ENCODE measurements at regions of chr5 and their contacts with region 1.

Region 1: DNA sequence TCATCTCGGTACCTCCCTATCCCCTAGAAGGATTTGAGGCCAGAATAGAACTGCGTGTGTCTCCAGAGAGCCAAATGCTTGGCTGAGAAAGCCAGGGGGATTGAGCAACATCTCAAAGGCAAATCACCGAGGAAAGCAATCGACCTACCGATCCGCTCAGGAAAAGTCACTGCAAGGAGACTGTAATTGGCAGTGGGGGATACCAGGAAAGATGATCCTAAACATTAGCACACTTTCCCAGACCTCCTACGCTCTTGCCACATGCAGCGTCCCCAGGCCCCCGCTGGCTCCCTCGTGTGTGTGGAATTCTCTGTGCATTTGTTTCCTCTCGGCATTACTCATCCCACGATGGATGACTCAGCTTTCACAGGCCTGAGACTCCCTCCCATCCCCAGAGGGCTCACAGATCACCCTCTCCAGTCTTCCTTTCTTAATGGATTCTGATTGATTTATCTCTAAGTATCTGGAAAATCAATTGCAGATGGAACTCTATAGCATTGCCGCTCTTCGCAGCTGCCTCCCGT is 82.2 kb upstream of the ICE1 start:
- DNase-seq: peak; percentile 80
- ATAC-seq: peak; percentile 92
- H3K4me3 ChIP-seq: no peak overlapping the region; a peak in 1 of 4 replicates
- H3K27ac ChIP-seq: peak overlapping the region; percentile 31
- H3K4me1 ChIP-seq: peaks cover 28 to 36% of the 10 kb centered on the region in 2 experiments
- H3K27me3 ChIP-seq: no peaks in the 10 kb centered on the region
- CTCF ChIP-seq: peak; percentile 32 to 74 (median 73); a peak in 5 of 6 replicates
- POLR2A ChIP-seq: no peak
- RAD21 ChIP-seq: peak; percentile 55

Region 2: GRCh38 chr5:5246736-5247135 is 93.5 kb before region 1 on chr5:
- CTCF ChIA-PET with region 1: no interaction called
- POLR2A ChIA-PET with region 1: no interaction called
- RAD21 ChIA-PET with region 1: no interaction called
- intact Hi-C with region 1: no loop called
- DNase-seq: no peak
- ATAC-seq: no peak
- H3K4me3 ChIP-seq: no peak overlapping the region
- H3K27ac ChIP-seq: no peak overlapping the region
- H3K4me1 ChIP-seq: no peaks in the 10 kb centered on the region
- H3K27me3 ChIP-seq: no peaks in the 10 kb centered on the region
- CTCF ChIP-seq: no peak
- POLR2A ChIP-seq: no peak
- RAD21 ChIP-seq: no peak

Region 3: GRCh38 chr5:5270958-5271605 is 69.2 kb before region 1 on chr5:
- CTCF ChIA-PET with region 1: no interaction called
- POLR2A ChIA-PET with region 1: no interaction called
- RAD21 ChIA-PET with region 1: no interaction called
- intact Hi-C with region 1: loop called (anchors 2 kb)
- DNase-seq: peak; percentile 57
- ATAC-seq: peak; percentile 100
- H3K4me3 ChIP-seq: peak overlapping the region; percentile 35 to 49
- H3K27ac ChIP-seq: peak overlapping the region; percentile 67
- H3K4me1 ChIP-seq: peaks cover 13 to 17% of the 10 kb centered on the region in 2 experiments
- H3K27me3 ChIP-seq: no peaks in the 10 kb centered on the region
- CTCF ChIP-seq: no peak
- POLR2A ChIP-seq: no peak
- RAD21 ChIP-seq: no peak

Region 4: GRCh38 chr5:5795074-5795771 is 455.0 kb after region 1 on chr5:
- CTCF ChIA-PET with region 1: no interaction called
- POLR2A ChIA-PET with region 1: no interaction called
- RAD21 ChIA-PET with region 1: no interaction called
- intact Hi-C with region 1: no loop called
- DNase-seq: no peak
- ATAC-seq: no peak
- H3K4me3 ChIP-seq: no peak overlapping the region
- H3K27ac ChIP-seq: no peak overlapping the region
- H3K4me1 ChIP-seq: no peaks in the 10 kb centered on the region
- H3K27me3 ChIP-seq: 0 out of 2 replicates have a peak, but pooled peaks cover 2% of the 10 kb centered on the region
- CTCF ChIP-seq: no peak
- POLR2A ChIP-seq: no peak
- RAD21 ChIP-seq: no peak